Activated naive CD4-positive, alpha-beta T cell treated with anti-CD3 and anti-CD28 coated beads for 36 hours (primary cell): ENCODE measurements at regions of chr15 and their contacts with region 1.

Region 1: GRCh38 chr15:71103102-71103676 is 12.1 kb upstream of the THSD4 start:
- DNase-seq: no peak
- H3K4me3 Mint-ChIP-seq: no peak overlapping the region
- H3K27ac Mint-ChIP-seq: no peak overlapping the region
- H3K4me1 Mint-ChIP-seq: peaks cover 3% of the 10 kb centered on the region
- H3K27me3 Mint-ChIP-seq: peaks cover 8% of the 10 kb centered on the region

Region 2: GRCh38 chr15:70826634-70827033 is 276.6 kb before region 1 on chr15:
- CTCF ChIA-PET with region 1: no interaction called
- intact Hi-C with region 1: loop called (anchors 10 kb)
- DNase-seq: no peak
- H3K4me3 Mint-ChIP-seq: no peak overlapping the region
- H3K27ac Mint-ChIP-seq: no peak overlapping the region
- H3K4me1 Mint-ChIP-seq: no peaks in the 10 kb centered on the region
- H3K27me3 Mint-ChIP-seq: peaks cover 5% of the 10 kb centered on the region

Region 3: DNA sequence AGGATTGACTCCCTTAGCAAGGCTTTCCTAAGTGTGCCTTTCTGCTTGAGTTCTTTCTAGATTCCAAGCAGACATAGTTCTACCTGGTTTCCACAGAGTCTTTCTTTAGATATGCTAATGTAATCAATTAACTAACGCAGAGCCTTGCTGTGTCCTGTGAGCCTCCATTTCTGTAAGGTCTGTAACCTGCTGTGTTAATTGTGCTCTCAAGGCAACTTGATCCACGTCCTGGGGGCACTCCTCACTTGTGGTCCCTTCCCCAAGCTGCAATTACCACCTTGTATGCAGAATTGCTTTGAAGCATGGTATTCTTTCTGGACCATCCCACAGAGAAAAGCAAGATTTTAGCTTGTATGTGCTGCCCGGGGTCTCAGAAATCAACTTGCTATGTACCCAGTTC is 17.4 kb before region 1 on chr15:
- CTCF ChIA-PET with region 1: no interaction called
- intact Hi-C with region 1: no loop called
- DNase-seq: no peak
- H3K4me3 Mint-ChIP-seq: no peak overlapping the region
- H3K27ac Mint-ChIP-seq: no peak overlapping the region
- H3K4me1 Mint-ChIP-seq: no peaks in the 10 kb centered on the region
- H3K27me3 Mint-ChIP-seq: peaks cover 31% of the 10 kb centered on the region